HepG2 (cell line): ENCODE measurements at regions of chr17 and their contacts with region 1.

Region 1: GRCh38 chr17:45936610-45937009 is 42.3 kb downstream of the MAPT start:
- DNase-seq: no peak
- ATAC-seq: peak; percentile 37
- H3K4me3 ChIP-seq: 0 out of 6 replicates have a peak overlapping the region, but pooled peaks of 1 of the 3 experiments have one; percentile 2
- H3K27ac ChIP-seq: peak overlapping the region; percentile 92
- H3K4me1 ChIP-seq: peaks cover 56% of the 10 kb centered on the region
- H3K27me3 ChIP-seq: no peaks in the 10 kb centered on the region; a peak in 1 of 5 replicates
- CTCF ChIP-seq: no peak
- EP300 ChIP-seq: no peak
- POLR2A ChIP-seq: no peak
- RAD21 ChIP-seq: no peak

Region 2: DNA sequence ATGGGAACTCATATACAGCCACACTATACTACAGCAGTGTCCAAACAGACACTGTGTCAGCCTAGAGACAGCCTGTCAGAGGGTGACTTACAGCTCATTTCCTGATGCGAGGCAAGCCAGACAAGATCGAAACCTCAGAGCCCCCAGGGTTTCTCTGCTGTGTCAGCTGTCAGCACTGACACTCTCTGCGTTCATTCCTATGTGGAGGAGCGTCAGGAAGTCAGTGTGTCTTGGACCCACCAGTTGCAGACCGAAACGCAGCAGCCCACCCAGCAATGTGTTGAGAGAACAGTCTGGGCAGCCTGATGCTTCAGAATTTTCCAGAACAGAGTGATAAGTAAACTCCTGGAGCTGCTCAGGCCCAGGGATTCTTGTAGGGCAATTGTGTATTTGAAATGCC is 62.9 kb before region 1 on chr17:
- CTCF ChIA-PET with region 1: no interaction called
- POLR2A ChIA-PET with region 1: no interaction called
- in situ Hi-C with region 1: loop called (anchors 10 kb)
- intact Hi-C with region 1: no loop called
- DNase-seq: no peak
- ATAC-seq: no peak; the same call in 2 of the 3 replicates
- H3K4me3 ChIP-seq: no peak overlapping the region
- H3K27ac ChIP-seq: no peak overlapping the region
- H3K4me1 ChIP-seq: no peaks in the 10 kb centered on the region
- H3K27me3 ChIP-seq: peaks cover 0 to 54% of the 10 kb centered on the region in 2 experiments; a peak in 3 of 5 replicates
- CTCF ChIP-seq: no peak
- EP300 ChIP-seq: no peak
- POLR2A ChIP-seq: no peak
- RAD21 ChIP-seq: no peak

Region 3: DNA sequence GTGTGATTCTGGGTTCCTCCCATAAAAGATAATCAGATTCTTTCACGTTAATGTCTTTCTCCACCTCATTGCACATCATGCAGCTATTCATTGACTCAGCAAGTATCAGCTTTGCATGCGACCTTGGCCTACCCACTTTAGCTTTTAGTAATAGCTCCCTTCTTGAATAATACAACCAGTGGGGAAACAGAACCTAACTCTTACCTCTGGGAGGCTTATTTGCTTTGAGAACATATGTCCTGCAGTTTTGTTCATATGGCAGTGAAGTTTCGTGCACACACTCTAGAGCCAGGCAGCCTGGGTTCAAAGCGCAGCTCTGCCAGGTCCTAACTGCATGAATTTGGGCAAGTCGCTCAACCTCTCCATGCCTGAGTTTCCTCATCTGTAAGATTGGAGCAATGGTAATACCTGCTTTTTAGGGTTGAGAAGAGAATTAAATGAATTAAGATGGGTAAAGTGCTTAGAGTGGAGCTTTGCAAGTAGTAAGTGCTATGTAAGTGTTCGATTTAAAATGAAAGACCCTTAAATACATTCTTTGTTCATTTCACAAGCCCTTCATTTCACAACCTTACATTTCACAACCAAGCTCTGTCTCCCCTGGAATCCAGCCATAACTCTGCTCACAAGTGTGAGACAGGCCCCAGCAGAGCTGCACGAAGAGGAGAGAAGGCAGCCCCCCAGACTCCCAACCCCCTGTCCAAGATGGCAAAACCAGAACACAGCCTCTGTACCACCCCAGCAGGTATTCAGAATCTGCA is 12.9 kb before region 1 on chr17:
- CTCF ChIA-PET with region 1: no interaction called
- POLR2A ChIA-PET with region 1: interaction called, 61 read pairs
- in situ Hi-C with region 1: no loop called
- intact Hi-C with region 1: no loop called
- DNase-seq: peak; percentile 86
- ATAC-seq: peak; percentile 81
- H3K4me3 ChIP-seq: peak overlapping the region in 2 of 3 experiments; percentile 10 to 35; a peak in 4 of 6 replicates
- H3K27ac ChIP-seq: peak overlapping the region; percentile 72
- H3K4me1 ChIP-seq: peaks cover 51% of the 10 kb centered on the region
- H3K27me3 ChIP-seq: no peaks in the 10 kb centered on the region
- CTCF ChIP-seq: 0 out of 2 replicates have a peak, but pooled peaks have one; percentile 5
- EP300 ChIP-seq: peak; percentile 72 to 92; a peak in 1 of 4 replicates
- POLR2A ChIP-seq: peak in 1 of 2 experiments; percentile 40; a peak in 1 of 4 replicates
- RAD21 ChIP-seq: 0 out of 2 replicates have a peak, but pooled peaks have one; percentile 11

Region 4: DNA sequence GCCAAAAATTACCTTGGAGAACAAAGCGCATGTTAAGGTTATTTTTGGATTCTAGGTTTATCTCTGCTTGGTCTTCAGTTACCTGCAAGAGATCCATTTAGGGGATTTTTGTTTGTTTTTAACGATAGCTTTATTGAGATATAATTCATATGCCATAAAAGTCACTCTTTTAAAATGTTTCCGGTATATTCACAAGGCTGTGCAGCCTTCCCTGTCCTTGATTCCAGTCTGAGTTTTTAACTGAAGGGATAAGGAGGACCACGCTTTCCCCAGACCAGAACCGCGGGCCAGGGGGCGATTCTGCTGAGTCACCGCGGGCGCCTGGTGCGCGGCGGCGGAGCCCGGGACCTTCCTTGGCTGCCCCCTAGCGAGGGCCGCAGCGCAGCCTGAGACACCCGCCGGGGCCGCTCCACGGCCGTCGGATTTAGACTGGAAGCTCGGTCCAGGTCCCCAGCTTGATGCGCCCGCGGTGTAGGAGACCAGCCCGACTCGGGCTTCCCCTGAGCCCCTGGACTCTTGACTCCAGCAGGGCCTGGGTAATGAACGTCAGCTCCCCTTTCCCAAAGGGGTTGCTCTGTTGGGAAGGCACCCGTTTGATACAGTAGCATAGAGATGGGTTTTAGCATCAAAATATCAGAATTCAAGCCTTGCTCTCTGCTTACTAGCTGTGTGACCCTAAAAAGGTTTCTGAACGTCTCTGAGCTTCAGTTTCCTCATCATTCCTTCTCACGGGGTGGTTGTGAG is 12.4 kb after region 1 on chr17:
- CTCF ChIA-PET with region 1: interaction called, 9 read pairs
- POLR2A ChIA-PET with region 1: interaction called, 28 read pairs
- in situ Hi-C with region 1: no loop called
- intact Hi-C with region 1: loop called (anchors 1 kb)
- DNase-seq: peak; percentile 61
- ATAC-seq: peak; percentile 98
- H3K4me3 ChIP-seq: peak overlapping the region in 2 of 3 experiments; percentile 12 to 49; a peak in 3 of 6 replicates
- H3K27ac ChIP-seq: peak overlapping the region; percentile 41
- H3K4me1 ChIP-seq: peaks cover 15% of the 10 kb centered on the region
- H3K27me3 ChIP-seq: peaks cover 4 to 12% of the 10 kb centered on the region in 2 experiments; a peak in 4 of 5 replicates
- CTCF ChIP-seq: peak; percentile 95
- EP300 ChIP-seq: peak; percentile 25 to 69; a peak in 2 of 4 replicates
- POLR2A ChIP-seq: no peak
- RAD21 ChIP-seq: peak; percentile 99

Region 5: DNA sequence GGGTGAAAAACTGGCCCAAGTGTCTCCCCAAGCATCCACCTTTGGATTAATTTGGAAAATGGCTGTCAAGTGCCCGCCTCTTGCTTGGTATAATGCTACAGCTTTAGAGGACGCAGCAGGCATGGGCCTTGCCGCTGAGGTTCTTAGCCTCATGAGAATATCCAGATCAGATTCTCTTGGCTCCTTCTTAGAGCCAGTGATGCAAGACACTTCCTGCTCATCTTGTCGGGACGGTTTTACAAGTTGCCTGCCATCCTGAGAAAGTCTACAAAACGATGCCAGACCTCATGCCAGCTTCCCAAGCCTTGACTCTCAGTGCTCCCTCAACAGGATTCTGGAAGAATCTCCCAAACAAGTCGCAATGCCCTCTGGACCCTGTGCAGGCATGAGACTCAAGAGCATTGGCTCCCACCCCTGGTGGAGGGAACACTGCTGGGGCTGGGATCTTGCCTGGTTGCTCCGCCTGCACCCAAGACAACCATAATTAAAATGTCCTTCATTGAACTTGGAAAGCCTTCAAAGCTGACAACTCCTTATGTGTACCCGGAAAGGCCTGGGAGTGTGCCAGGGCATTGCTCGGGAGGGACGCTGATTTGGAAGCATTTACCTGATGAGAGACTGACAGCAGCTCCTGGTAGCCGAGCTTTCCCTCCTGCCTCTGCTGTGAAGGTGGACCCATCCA is 36.6 kb after region 1 on chr17:
- CTCF ChIA-PET with region 1: no interaction called
- POLR2A ChIA-PET with region 1: no interaction called
- in situ Hi-C with region 1: no loop called
- intact Hi-C with region 1: no loop called
- DNase-seq: no peak
- ATAC-seq: no peak
- H3K4me3 ChIP-seq: no peak overlapping the region
- H3K27ac ChIP-seq: no peak overlapping the region
- H3K4me1 ChIP-seq: no peaks in the 10 kb centered on the region
- H3K27me3 ChIP-seq: no peaks in the 10 kb centered on the region; a peak in 1 of 5 replicates
- CTCF ChIP-seq: no peak
- EP300 ChIP-seq: no peak
- POLR2A ChIP-seq: no peak
- RAD21 ChIP-seq: no peak